ENCODE measurements at regions of chr12 and their contacts with region 1.

Region 1: GRCh38 chr12:121467115-121467793 is 67.3 kb downstream of the RNF34 start:
- DNase-seq: peak; percentile 94
- ATAC-seq: peak; percentile 85
- H3K4me3 ChIP-seq: peak overlapping the region in 4 of 5 experiments; percentile 56 to 82 (median 76)
- H3K4me3 Mint-ChIP-seq: peak overlapping the region; percentile 49
- H3K27ac ChIP-seq: peak overlapping the region; percentile 62 to 82
- H3K27ac Mint-ChIP-seq: peak overlapping the region; percentile 86
- H3K4me1 ChIP-seq: peaks cover 23 to 49% of the 10 kb centered on the region in 2 donors
- H3K4me1 Mint-ChIP-seq: peaks cover 59% of the 10 kb centered on the region
- H3K27me3 ChIP-seq: no peaks in the 10 kb centered on the region
- H3K27me3 Mint-ChIP-seq: no peaks in the 10 kb centered on the region
- CTCF ChIP-seq: no peak

Region 2: GRCh38 chr12:121296618-121297434 is 170.4 kb before region 1 on chr12 and contains the start of gene CAMKK2:
- CTCF ChIA-PET with region 1: no interaction called
- POLR2A ChIA-PET with region 1: interaction called, 3 read pairs
- intact Hi-C with region 1: loop called (anchors 1 kb)
- DNase-seq: peak; percentile 94
- ATAC-seq: peak; percentile 87
- H3K4me3 ChIP-seq: peak within 1 kb of the TSS; percentile 70 to 89 (median 85)
- H3K4me3 Mint-ChIP-seq: peak within 1 kb of the TSS; percentile 90
- H3K27ac ChIP-seq: peak within 1 kb of the TSS; percentile 34 to 62
- H3K27ac Mint-ChIP-seq: peak within 1 kb of the TSS; percentile 84
- H3K4me1 ChIP-seq: peaks cover 15 to 30% of the 10 kb centered on the region in 2 donors
- H3K4me1 Mint-ChIP-seq: peaks cover 26% of the 10 kb centered on the region
- H3K27me3 ChIP-seq: no peaks in the 10 kb centered on the region
- H3K27me3 Mint-ChIP-seq: no peaks in the 10 kb centered on the region
- CTCF ChIP-seq: peak; percentile 52
- total RNA-seq, gene CAMKK2: 17.1 and 22.0 TPM in 2 replicates

Region 3: GRCh38 chr12:121351820-121352681 is 115.2 kb before region 1 on chr12 and contains the start of gene ANAPC5:
- CTCF ChIA-PET with region 1: no interaction called
- POLR2A ChIA-PET with region 1: no interaction called
- intact Hi-C with region 1: no loop called
- DNase-seq: peak; percentile 95
- ATAC-seq: peak; percentile 98
- H3K4me3 ChIP-seq: peak within 1 kb of the TSS; percentile 75 to 93 (median 83)
- H3K4me3 Mint-ChIP-seq: peak within 1 kb of the TSS; percentile 96
- H3K27ac ChIP-seq: peak within 1 kb of the TSS; percentile 40 to 78
- H3K27ac Mint-ChIP-seq: peak within 1 kb of the TSS; percentile 97
- H3K4me1 ChIP-seq: peaks cover 12 to 18% of the 10 kb centered on the region in 2 donors
- H3K4me1 Mint-ChIP-seq: peaks cover 27% of the 10 kb centered on the region
- H3K27me3 ChIP-seq: no peaks in the 10 kb centered on the region
- H3K27me3 Mint-ChIP-seq: no peaks in the 10 kb centered on the region
- CTCF ChIP-seq: no peak
- total RNA-seq, gene ANAPC5: 150 and 154 TPM in 2 replicates

Region 4: GRCh38 chr12:121399391-121400331 is 67.6 kb before region 1 on chr12 and contains the start of gene RNF34:
- CTCF ChIA-PET with region 1: interaction called, 4 read pairs
- POLR2A ChIA-PET with region 1: no interaction called
- intact Hi-C with region 1: loop called (anchors 1 kb)
- DNase-seq: peak; percentile 99
- ATAC-seq: peak; percentile 94
- H3K4me3 ChIP-seq: peak within 1 kb of the TSS; percentile 79 to 96 (median 82)
- H3K4me3 Mint-ChIP-seq: peak within 1 kb of the TSS; percentile 93
- H3K27ac ChIP-seq: peak within 1 kb of the TSS; percentile 76 to 89
- H3K27ac Mint-ChIP-seq: peak within 1 kb of the TSS; percentile 99
- H3K4me1 ChIP-seq: peaks cover 24 to 25% of the 10 kb centered on the region in 2 donors
- H3K4me1 Mint-ChIP-seq: peaks cover 31% of the 10 kb centered on the region
- H3K27me3 ChIP-seq: no peaks in the 10 kb centered on the region
- H3K27me3 Mint-ChIP-seq: no peaks in the 10 kb centered on the region
- CTCF ChIP-seq: no peak
- total RNA-seq, gene RNF34: 79.6 and 86.7 TPM in 2 replicates

Region 5: GRCh38 chr12:121423682-121424623 is 43.3 kb before region 1 on chr12:
- CTCF ChIA-PET with region 1: no interaction called
- POLR2A ChIA-PET with region 1: interaction called, 4 read pairs
- intact Hi-C with region 1: loop called (anchors 2 kb)
- DNase-seq: no peak
- ATAC-seq: no peak
- H3K4me3 ChIP-seq: no peak overlapping the region
- H3K4me3 Mint-ChIP-seq: no peak overlapping the region
- H3K27ac ChIP-seq: no peak overlapping the region
- H3K27ac Mint-ChIP-seq: peak overlapping the region; percentile 59
- H3K4me1 ChIP-seq: peaks cover 12 to 25% of the 10 kb centered on the region in 2 donors
- H3K4me1 Mint-ChIP-seq: peaks cover 20% of the 10 kb centered on the region
- H3K27me3 ChIP-seq: no peaks in the 10 kb centered on the region
- H3K27me3 Mint-ChIP-seq: no peaks in the 10 kb centered on the region
- CTCF ChIP-seq: no peak

Region 6: GRCh38 chr12:121483949-121484348 is 16.7 kb after region 1 on chr12:
- CTCF ChIA-PET with region 1: interaction called, 15 read pairs
- POLR2A ChIA-PET with region 1: interaction called, 3 read pairs
- intact Hi-C with region 1: no loop called
- DNase-seq: no peak
- ATAC-seq: no peak
- H3K4me3 ChIP-seq: no peak overlapping the region
- H3K4me3 Mint-ChIP-seq: no peak overlapping the region
- H3K27ac ChIP-seq: no peak overlapping the region
- H3K27ac Mint-ChIP-seq: no peak overlapping the region
- H3K4me1 ChIP-seq: no peaks in the 10 kb centered on the region
- H3K4me1 Mint-ChIP-seq: peaks cover 17% of the 10 kb centered on the region
- H3K27me3 ChIP-seq: no peaks in the 10 kb centered on the region
- H3K27me3 Mint-ChIP-seq: no peaks in the 10 kb centered on the region
- CTCF ChIP-seq: no peak

Region 7: DNA sequence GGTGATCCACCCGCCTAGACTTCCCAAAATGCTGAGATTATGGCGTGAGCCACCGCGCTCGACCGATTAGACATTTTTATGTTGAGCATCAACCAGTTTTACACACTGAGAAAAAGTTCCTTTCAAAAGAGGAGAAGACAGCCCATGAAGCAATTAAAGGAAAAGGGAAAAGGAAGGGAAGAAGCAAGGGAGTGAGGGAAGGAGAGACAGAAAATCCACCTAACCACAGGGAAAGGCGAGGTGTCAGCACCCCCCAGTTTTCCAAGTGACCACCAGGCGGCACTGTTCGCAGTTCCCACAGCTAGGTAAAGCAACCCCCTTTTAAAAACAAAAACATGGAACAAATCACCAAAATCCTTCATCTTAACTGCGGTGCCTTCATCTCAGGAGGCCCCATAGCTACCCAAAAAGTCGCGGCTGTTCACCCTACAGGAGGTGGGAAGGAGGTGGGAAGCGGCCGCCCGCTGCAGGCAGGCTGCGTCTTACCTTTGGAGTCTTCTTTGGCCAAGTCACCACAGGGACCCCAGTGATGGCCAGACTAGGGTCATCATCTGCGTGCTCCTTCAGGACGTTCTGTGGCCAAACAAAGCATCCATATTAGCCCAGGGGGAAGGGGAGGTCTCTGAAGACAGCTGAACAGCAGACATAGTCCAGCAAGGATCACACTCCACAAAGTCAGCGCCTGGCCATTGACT is 27.0 kb after region 1 on chr12:
- CTCF ChIA-PET with region 1: interaction called, 10 read pairs
- POLR2A ChIA-PET with region 1: no interaction called
- intact Hi-C with region 1: no loop called
- DNase-seq: peak; percentile 74
- ATAC-seq: peak; percentile 54
- H3K4me3 ChIP-seq: no peak overlapping the region
- H3K4me3 Mint-ChIP-seq: no peak overlapping the region
- H3K27ac ChIP-seq: no peak overlapping the region
- H3K27ac Mint-ChIP-seq: peak overlapping the region; percentile 60
- H3K4me1 ChIP-seq: peaks cover 23 to 42% of the 10 kb centered on the region in 2 donors
- H3K4me1 Mint-ChIP-seq: peaks cover 31% of the 10 kb centered on the region
- H3K27me3 ChIP-seq: no peaks in the 10 kb centered on the region
- H3K27me3 Mint-ChIP-seq: no peaks in the 10 kb centered on the region
- CTCF ChIP-seq: peak; percentile 85

Region 8: GRCh38 chr12:121673003-121673511 is 205.8 kb after region 1 on chr12:
- CTCF ChIA-PET with region 1: no interaction called
- POLR2A ChIA-PET with region 1: no interaction called
- intact Hi-C with region 1: no loop called
- DNase-seq: no peak
- ATAC-seq: no peak
- H3K4me3 ChIP-seq: peak overlapping the region; percentile 26 to 76 (median 57)
- H3K4me3 Mint-ChIP-seq: peak overlapping the region; percentile 87
- H3K27ac ChIP-seq: peak overlapping the region; percentile 68 to 83
- H3K27ac Mint-ChIP-seq: peak overlapping the region; percentile 94
- H3K4me1 ChIP-seq: peaks cover 10 to 28% of the 10 kb centered on the region in 2 donors
- H3K4me1 Mint-ChIP-seq: peaks cover 21% of the 10 kb centered on the region
- H3K27me3 ChIP-seq: no peaks in the 10 kb centered on the region
- H3K27me3 Mint-ChIP-seq: no peaks in the 10 kb centered on the region
- CTCF ChIP-seq: no peak

Region 9: GRCh38 chr12:121688966-121689365 is 221.7 kb after region 1 on chr12:
- CTCF ChIA-PET with region 1: no interaction called
- POLR2A ChIA-PET with region 1: interaction called, 3 read pairs
- intact Hi-C with region 1: loop called (anchors 1 kb)
- DNase-seq: no peak
- ATAC-seq: no peak
- H3K4me3 ChIP-seq: no peak overlapping the region
- H3K4me3 Mint-ChIP-seq: no peak overlapping the region
- H3K27ac ChIP-seq: no peak overlapping the region
- H3K27ac Mint-ChIP-seq: peak overlapping the region; percentile 10
- H3K4me1 ChIP-seq: peaks cover 4 to 16% of the 10 kb centered on the region in 2 donors
- H3K4me1 Mint-ChIP-seq: peaks cover 8% of the 10 kb centered on the region
- H3K27me3 ChIP-seq: no peaks in the 10 kb centered on the region
- H3K27me3 Mint-ChIP-seq: no peaks in the 10 kb centered on the region
- CTCF ChIP-seq: no peak

Region 10: DNA sequence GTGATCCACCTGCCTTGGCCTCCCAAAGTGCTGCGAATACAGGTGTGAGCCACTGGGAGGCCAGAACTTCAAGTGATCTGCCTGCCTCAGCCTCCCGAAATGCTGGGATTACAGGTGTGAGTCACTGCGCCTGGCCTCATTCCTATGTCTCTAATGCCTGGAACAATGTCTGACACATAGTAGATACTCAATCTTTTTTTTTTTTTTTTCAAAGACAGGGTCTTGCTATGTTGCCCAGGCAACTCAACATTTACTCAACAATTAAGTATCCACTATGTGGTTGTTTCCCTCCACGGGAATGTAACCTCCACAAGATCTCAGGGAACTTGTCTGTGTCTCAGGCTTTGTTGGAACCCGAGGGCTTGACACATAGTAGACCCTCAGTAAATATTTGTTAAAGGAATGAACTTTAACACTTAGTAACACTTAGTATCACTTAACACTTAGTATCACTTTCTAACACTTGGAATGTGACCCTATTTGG is 242.3 kb after region 1 on chr12:
- CTCF ChIA-PET with region 1: no interaction called
- POLR2A ChIA-PET with region 1: no interaction called
- intact Hi-C with region 1: no loop called
- DNase-seq: no peak
- ATAC-seq: no peak
- H3K4me3 ChIP-seq: no peak overlapping the region
- H3K4me3 Mint-ChIP-seq: no peak overlapping the region
- H3K27ac ChIP-seq: no peak overlapping the region
- H3K27ac Mint-ChIP-seq: no peak overlapping the region
- H3K4me1 ChIP-seq: peaks cover 22 to 28% of the 10 kb centered on the region in 2 donors
- H3K4me1 Mint-ChIP-seq: peaks cover 25% of the 10 kb centered on the region
- H3K27me3 ChIP-seq: no peaks in the 10 kb centered on the region
- H3K27me3 Mint-ChIP-seq: no peaks in the 10 kb centered on the region
- CTCF ChIP-seq: no peak

Region 11: GRCh38 chr12:121784460-121784859 is 317.2 kb after region 1 on chr12:
- CTCF ChIA-PET with region 1: no interaction called
- POLR2A ChIA-PET with region 1: no interaction called
- intact Hi-C with region 1: no loop called
- DNase-seq: no peak
- ATAC-seq: no peak
- H3K4me3 ChIP-seq: peak overlapping the region in 1 of 5 experiments; percentile 37
- H3K4me3 Mint-ChIP-seq: peak overlapping the region; percentile 71
- H3K27ac ChIP-seq: peak overlapping the region; percentile 1 to 75
- H3K27ac Mint-ChIP-seq: peak overlapping the region; percentile 85
- H3K4me1 ChIP-seq: peaks cover 77 to 90% of the 10 kb centered on the region in 2 donors
- H3K4me1 Mint-ChIP-seq: peaks cover 79% of the 10 kb centered on the region
- H3K27me3 ChIP-seq: no peaks in the 10 kb centered on the region
- H3K27me3 Mint-ChIP-seq: no peaks in the 10 kb centered on the region
- CTCF ChIP-seq: no peak